ENCODE measurements at regions of chr11 and their contacts with region 1.

Region 1: DNA sequence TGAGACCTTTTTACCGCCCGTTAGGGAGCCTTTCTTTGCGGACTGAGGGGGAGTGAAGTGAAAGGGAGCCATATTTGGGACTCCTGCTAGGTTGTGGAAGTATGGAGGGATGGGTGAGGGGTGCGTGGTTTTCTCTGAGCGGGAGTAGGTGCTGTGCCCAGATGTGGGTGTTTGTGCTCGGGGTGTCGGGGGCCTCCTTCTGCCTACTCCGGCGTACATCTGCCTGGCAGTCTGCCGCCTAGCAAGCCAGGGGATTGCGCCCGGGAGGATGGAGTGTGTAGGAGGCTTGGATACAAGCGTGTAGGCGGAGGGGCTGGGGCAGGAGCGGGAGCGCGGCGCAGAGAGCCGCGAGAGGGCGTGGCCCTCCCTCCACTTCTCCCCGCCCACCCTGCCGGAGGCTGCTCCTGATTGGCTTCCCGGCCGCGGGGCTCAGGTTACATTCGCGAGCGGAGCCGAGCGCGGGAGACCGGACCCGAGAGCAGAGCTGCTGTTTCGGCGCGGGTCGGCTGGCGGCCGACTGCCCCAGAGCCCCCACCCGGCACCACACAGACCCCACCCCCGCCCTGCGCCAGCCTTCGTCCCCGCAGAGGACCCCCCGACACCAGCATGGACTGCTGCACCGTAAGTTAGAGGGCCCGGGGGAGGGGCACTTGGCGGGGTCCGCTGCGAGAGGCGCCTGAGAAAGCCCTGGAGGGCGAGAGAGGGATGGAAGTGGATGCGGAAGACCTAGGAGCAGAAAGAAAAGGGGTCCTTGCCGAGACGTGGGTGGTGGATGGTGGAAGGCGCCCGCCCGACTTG is at the start of gene NRGN:
- DNase-seq: peak; percentile 76 to 94
- H3K4me3 ChIP-seq: peak within 1 kb of the TSS; percentile 63 to 89
- H3K27ac ChIP-seq: peak within 1 kb of the TSS; percentile 28 to 78
- H3K4me1 ChIP-seq: peaks cover 13% of the 10 kb centered on the region in 2 donors
- H3K27me3 ChIP-seq: no peaks in the 10 kb centered on the region
- CTCF ChIP-seq: no peak
- total RNA-seq, gene NRGN: 5.3 TPM

Region 2: GRCh38 chr11:124586238-124586860 is 153.3 kb before region 1 on chr11:
- intact Hi-C with region 1: no loop called
- DNase-seq: no peak
- H3K4me3 ChIP-seq: no peak overlapping the region
- H3K27ac ChIP-seq: no peak overlapping the region
- H3K4me1 ChIP-seq: no peaks in the 10 kb centered on the region
- H3K27me3 ChIP-seq: no peaks in the 10 kb centered on the region
- CTCF ChIP-seq: peak; percentile 26 to 56 (median 45)

Region 3: GRCh38 chr11:124717786-124718651 is 21.7 kb before region 1 on chr11:
- intact Hi-C with region 1: loop called (anchors 2 kb)
- DNase-seq: no peak
- H3K4me3 ChIP-seq: peak overlapping the region; percentile 48 to 64
- H3K27ac ChIP-seq: peak overlapping the region; percentile 51 to 65
- H3K4me1 ChIP-seq: peaks cover 0 to 8% of the 10 kb centered on the region in 2 donors
- H3K27me3 ChIP-seq: no peaks in the 10 kb centered on the region
- CTCF ChIP-seq: no peak

Region 4: DNA sequence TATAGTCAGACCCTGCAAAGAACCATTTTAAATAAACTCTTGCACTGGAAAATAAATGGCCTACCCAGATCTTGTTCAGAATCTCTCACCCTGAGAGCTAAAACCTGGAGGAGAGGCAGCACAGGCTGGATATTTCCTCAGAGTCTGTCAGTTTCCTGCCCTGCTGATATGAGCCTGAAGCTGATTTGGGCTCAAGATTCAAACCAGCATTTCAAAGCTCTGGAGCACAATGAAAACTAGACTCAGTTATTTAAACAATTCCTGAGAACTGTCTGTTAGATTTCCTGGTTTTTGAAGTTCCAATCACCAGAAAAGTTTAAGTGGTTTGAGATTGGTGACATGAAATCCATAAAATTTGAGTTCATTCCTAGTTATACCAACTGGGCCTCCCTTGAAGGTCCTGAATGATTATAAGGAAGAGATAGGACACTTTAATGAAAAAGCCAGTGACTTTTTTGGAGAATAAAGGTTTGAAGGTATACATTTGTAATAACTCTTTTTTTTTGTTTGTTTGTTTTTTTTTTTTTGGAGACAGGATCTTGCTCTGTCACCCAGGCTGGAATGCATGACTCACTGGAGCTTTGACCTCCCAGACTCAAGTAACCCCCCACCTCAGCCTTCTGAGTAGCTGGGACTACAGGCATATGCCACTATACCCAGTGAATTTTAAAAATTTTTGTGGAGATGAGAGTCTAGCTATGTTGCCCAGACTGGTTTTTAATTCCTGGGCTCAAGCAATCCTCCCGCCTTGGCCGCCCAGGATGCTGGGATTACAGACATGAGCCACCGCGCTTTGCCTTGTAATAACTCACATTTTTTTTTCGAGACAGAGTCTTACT is 30.3 kb after region 1 on chr11:
- intact Hi-C with region 1: no loop called
- DNase-seq: no peak
- H3K4me3 ChIP-seq: no peak overlapping the region
- H3K27ac ChIP-seq: no peak overlapping the region
- H3K4me1 ChIP-seq: no peaks in the 10 kb centered on the region
- H3K27me3 ChIP-seq: no peaks in the 10 kb centered on the region
- CTCF ChIP-seq: no peak

Region 5: DNA sequence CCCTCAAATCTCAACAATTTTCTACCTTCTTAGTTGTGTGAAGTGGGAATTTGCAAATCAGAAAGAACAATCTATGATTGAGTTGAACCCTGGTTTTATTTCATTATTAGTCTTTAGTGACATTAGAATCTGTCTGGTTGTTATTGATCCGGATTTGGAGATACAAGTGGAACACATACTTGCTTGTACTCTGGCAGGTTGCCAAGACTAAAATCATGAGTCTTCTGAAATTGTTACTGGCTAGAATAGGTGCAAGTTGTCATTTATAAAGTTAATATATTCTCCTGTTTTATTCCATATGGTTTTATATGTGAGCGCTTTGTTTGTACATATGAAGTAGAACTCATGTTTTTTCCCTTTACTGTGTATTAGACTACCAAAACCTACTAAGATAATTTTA is 237.3 kb after region 1 on chr11:
- intact Hi-C with region 1: no loop called
- DNase-seq: no peak
- H3K4me3 ChIP-seq: no peak overlapping the region
- H3K27ac ChIP-seq: no peak overlapping the region
- H3K4me1 ChIP-seq: no peaks in the 10 kb centered on the region
- H3K27me3 ChIP-seq: no peaks in the 10 kb centered on the region
- CTCF ChIP-seq: no peak